ENCODE measurements at regions of chr1 and their contacts with region 1.

Region 1: DNA sequence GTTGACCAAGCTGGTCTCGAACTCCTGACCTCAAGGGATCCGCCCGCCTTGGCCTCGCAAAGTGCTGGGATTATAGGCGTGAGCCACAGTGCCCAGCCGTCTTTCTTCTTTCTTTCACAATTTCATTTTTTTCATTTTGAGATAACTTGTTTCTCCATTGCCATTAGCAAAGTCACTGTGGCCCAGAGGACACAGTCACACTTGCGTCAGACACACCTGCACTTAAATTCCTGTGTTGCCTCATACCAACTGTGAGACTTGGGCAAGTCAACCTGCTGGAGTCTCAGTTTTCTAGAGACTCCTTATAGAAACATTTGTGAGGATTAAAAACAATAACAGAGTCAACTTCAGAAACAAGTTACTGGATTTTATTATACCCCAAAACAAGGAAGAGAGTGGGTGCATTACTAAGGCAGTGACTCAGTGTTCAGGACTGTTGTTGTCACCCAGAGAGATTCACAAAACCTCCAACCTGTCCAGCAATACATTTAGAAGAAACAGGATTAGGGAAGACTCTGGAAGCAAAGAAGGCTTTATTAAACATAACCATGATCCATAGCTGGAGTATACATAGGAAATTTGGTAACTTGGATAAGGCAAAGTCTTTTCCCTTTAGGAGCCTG is 2.6 kb downstream of the TEDDM1 start:
- DNase-seq: no peak
- ATAC-seq: no peak
- H3K4me3 ChIP-seq: no peak overlapping the region
- H3K4me3 Mint-ChIP-seq: no peak overlapping the region
- H3K27ac ChIP-seq: no peak overlapping the region
- H3K27ac Mint-ChIP-seq: no peak overlapping the region
- H3K4me1 ChIP-seq: peaks cover 3 to 8% of the 10 kb centered on the region in 2 donors
- H3K4me1 Mint-ChIP-seq: peaks cover 9% of the 10 kb centered on the region
- H3K27me3 ChIP-seq: peaks cover 0 to 7% (median 3%) of the 10 kb centered on the region in 4 experiments
- H3K27me3 Mint-ChIP-seq: peaks cover 4% of the 10 kb centered on the region
- CTCF ChIP-seq: no peak

Region 2: DNA sequence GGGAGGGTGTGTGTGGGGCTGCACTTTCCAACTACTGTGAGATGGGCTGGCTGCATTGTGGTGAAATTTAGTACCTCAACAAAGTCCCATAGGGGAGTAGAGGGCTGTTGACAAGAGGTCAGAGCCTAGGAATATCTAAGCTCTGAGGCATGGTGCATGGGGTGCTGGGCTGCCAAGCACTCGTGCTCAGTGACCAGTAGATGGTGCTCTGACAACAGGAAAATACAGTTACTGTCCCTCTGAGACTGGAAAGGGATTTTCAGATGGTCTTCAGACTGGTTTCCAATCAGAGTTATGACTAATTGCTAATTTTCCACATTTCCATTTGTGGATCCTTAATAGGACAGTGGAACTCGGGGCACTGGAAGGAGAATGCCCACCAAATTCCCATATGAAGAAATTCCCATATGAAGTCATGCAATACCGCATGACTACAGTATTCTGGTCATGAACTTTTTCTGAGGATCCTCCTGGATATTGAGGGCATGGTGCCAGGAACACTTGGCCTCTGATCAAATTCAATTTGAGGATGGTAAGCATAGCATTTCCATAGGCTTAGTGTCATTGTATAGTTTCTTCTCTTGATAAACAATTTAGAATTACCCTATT is 918.6 kb before region 1 on chr1:
- CTCF ChIA-PET with region 1: interaction called, 9 read pairs
- POLR2A ChIA-PET with region 1: no interaction called
- intact Hi-C with region 1: loop called (anchors 1 kb)
- DNase-seq: peak; percentile 64
- ATAC-seq: peak; percentile 60
- H3K4me3 ChIP-seq: no peak overlapping the region
- H3K4me3 Mint-ChIP-seq: no peak overlapping the region
- H3K27ac ChIP-seq: no peak overlapping the region
- H3K27ac Mint-ChIP-seq: no peak overlapping the region
- H3K4me1 ChIP-seq: peaks cover 8 to 11% of the 10 kb centered on the region in 2 donors
- H3K4me1 Mint-ChIP-seq: peaks cover 12% of the 10 kb centered on the region
- H3K27me3 ChIP-seq: peaks cover 0 to 32% (median 11%) of the 10 kb centered on the region in 4 experiments
- H3K27me3 Mint-ChIP-seq: peaks cover 37% of the 10 kb centered on the region
- CTCF ChIP-seq: peak; percentile 77

Region 3: GRCh38 chr1:182084487-182085316 is 313.2 kb before region 1 on chr1:
- CTCF ChIA-PET with region 1: interaction called, 31 read pairs
- POLR2A ChIA-PET with region 1: no interaction called
- intact Hi-C with region 1: no loop called
- DNase-seq: peak; percentile 53
- ATAC-seq: peak; percentile 64
- H3K4me3 ChIP-seq: no peak overlapping the region
- H3K4me3 Mint-ChIP-seq: no peak overlapping the region
- H3K27ac ChIP-seq: no peak overlapping the region
- H3K27ac Mint-ChIP-seq: no peak overlapping the region
- H3K4me1 ChIP-seq: peaks cover 0 to 5% of the 10 kb centered on the region in 2 donors
- H3K4me1 Mint-ChIP-seq: peaks cover 5% of the 10 kb centered on the region
- H3K27me3 ChIP-seq: no peaks in the 10 kb centered on the region
- H3K27me3 Mint-ChIP-seq: no peaks in the 10 kb centered on the region
- CTCF ChIP-seq: peak; percentile 59

Region 4: GRCh38 chr1:182149411-182149965 is 248.4 kb before region 1 on chr1:
- CTCF ChIA-PET with region 1: interaction called, 378 read pairs
- POLR2A ChIA-PET with region 1: no interaction called
- intact Hi-C with region 1: no loop called
- DNase-seq: peak; percentile 6
- ATAC-seq: no peak
- H3K4me3 ChIP-seq: peak overlapping the region in 1 of 5 experiments; percentile 6
- H3K4me3 Mint-ChIP-seq: no peak overlapping the region
- H3K27ac ChIP-seq: no peak overlapping the region
- H3K27ac Mint-ChIP-seq: no peak overlapping the region
- H3K4me1 ChIP-seq: peaks cover 0 to 5% of the 10 kb centered on the region in 2 donors
- H3K4me1 Mint-ChIP-seq: peaks cover 8% of the 10 kb centered on the region
- H3K27me3 ChIP-seq: no peaks in the 10 kb centered on the region
- H3K27me3 Mint-ChIP-seq: no peaks in the 10 kb centered on the region
- CTCF ChIP-seq: no peak

Region 5: GRCh38 chr1:182376936-182377574 is 20.8 kb before region 1 on chr1:
- CTCF ChIA-PET with region 1: interaction called, 16 read pairs
- POLR2A ChIA-PET with region 1: no interaction called
- intact Hi-C with region 1: no loop called
- DNase-seq: no peak
- ATAC-seq: no peak
- H3K4me3 ChIP-seq: no peak overlapping the region
- H3K4me3 Mint-ChIP-seq: no peak overlapping the region
- H3K27ac ChIP-seq: no peak overlapping the region
- H3K27ac Mint-ChIP-seq: no peak overlapping the region
- H3K4me1 ChIP-seq: no peaks in the 10 kb centered on the region
- H3K4me1 Mint-ChIP-seq: no peaks in the 10 kb centered on the region
- H3K27me3 ChIP-seq: no peaks in the 10 kb centered on the region
- H3K27me3 Mint-ChIP-seq: no peaks in the 10 kb centered on the region
- CTCF ChIP-seq: no peak

Region 6: GRCh38 chr1:182381962-182382819 is 15.7 kb before region 1 on chr1:
- CTCF ChIA-PET with region 1: interaction called, 16 read pairs
- POLR2A ChIA-PET with region 1: no interaction called
- intact Hi-C with region 1: no loop called
- DNase-seq: no peak
- ATAC-seq: no peak
- H3K4me3 ChIP-seq: no peak overlapping the region
- H3K4me3 Mint-ChIP-seq: no peak overlapping the region
- H3K27ac ChIP-seq: no peak overlapping the region
- H3K27ac Mint-ChIP-seq: no peak overlapping the region
- H3K4me1 ChIP-seq: no peaks in the 10 kb centered on the region
- H3K4me1 Mint-ChIP-seq: no peaks in the 10 kb centered on the region
- H3K27me3 ChIP-seq: no peaks in the 10 kb centered on the region
- H3K27me3 Mint-ChIP-seq: no peaks in the 10 kb centered on the region
- CTCF ChIP-seq: no peak

Region 7: GRCh38 chr1:182460550-182460951 is 62.7 kb after region 1 on chr1:
- CTCF ChIA-PET with region 1: no interaction called
- POLR2A ChIA-PET with region 1: no interaction called
- intact Hi-C with region 1: no loop called
- DNase-seq: no peak
- ATAC-seq: no peak
- H3K4me3 ChIP-seq: no peak overlapping the region
- H3K4me3 Mint-ChIP-seq: no peak overlapping the region
- H3K27ac ChIP-seq: no peak overlapping the region
- H3K27ac Mint-ChIP-seq: no peak overlapping the region
- H3K4me1 ChIP-seq: no peaks in the 10 kb centered on the region
- H3K4me1 Mint-ChIP-seq: no peaks in the 10 kb centered on the region
- H3K27me3 ChIP-seq: peaks cover 0 to 2% (median 0%) of the 10 kb centered on the region in 4 experiments
- H3K27me3 Mint-ChIP-seq: peaks cover 25% of the 10 kb centered on the region
- CTCF ChIP-seq: no peak

Region 8: DNA sequence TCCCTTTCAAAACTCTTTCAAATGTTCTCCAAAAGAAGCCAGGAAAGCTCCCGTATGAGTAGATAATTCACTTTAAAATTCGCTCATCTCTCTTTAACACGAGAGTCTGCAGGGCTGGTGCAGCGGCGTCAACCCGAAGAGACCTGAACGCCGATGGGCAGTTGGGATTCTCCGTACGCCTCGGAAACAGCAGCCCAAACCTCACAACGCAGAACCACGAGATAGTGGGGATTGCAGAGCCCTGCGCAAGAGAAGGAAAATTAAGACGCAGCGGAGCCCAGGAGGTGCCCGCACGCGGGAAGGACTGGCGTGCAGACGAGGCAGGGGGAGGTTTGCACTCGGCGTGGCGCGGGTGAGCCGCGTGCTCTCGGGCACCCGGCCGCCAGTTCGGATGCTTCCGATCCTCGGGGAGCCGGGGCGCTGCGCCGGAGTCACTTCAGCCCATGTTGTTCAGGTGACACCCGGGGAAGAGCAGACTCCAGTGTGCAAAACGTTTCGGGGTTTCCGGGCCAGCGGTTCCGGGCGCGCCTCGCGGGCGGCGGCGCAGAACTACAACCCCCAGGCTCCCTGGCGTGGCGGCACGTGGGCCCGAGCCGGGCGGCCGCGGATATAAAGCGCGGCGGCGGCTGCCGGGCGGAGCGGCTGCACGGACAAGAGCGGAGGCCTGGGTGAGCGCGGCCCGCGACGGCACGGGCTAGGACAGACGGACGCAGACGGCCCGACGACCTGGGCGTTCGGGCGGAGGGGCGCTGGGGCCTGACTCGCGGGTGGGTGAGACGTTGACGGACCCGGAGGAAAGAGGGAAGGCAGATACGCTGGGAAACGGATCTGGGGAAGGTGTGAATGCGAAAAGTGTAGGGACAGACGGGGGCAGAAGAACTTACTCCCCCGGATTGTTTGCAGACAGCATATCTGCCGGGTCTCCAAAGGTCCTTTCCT is 391.5 kb after region 1 on chr1 and contains the start of gene NPL:
- CTCF ChIA-PET with region 1: interaction called, 4 read pairs
- POLR2A ChIA-PET with region 1: no interaction called
- intact Hi-C with region 1: loop called (anchors 5 kb)
- DNase-seq: peak; percentile 88
- ATAC-seq: peak; percentile 95
- H3K4me3 ChIP-seq: peak within 1 kb of the TSS; percentile 49 to 70 (median 63)
- H3K4me3 Mint-ChIP-seq: peak within 1 kb of the TSS; percentile 90
- H3K27ac ChIP-seq: peak within 1 kb of the TSS in 1 of 2 donors; percentile 63
- H3K27ac Mint-ChIP-seq: peak within 1 kb of the TSS; percentile 87
- H3K4me1 ChIP-seq: peaks cover 9 to 11% of the 10 kb centered on the region in 2 donors
- H3K4me1 Mint-ChIP-seq: peaks cover 16% of the 10 kb centered on the region
- H3K27me3 ChIP-seq: peaks cover 0 to 6% (median 0%) of the 10 kb centered on the region in 4 experiments
- H3K27me3 Mint-ChIP-seq: peaks cover 3% of the 10 kb centered on the region
- CTCF ChIP-seq: no peak
- total RNA-seq, gene NPL: 3.4 and 5.9 TPM in 2 replicates

Region 9: DNA sequence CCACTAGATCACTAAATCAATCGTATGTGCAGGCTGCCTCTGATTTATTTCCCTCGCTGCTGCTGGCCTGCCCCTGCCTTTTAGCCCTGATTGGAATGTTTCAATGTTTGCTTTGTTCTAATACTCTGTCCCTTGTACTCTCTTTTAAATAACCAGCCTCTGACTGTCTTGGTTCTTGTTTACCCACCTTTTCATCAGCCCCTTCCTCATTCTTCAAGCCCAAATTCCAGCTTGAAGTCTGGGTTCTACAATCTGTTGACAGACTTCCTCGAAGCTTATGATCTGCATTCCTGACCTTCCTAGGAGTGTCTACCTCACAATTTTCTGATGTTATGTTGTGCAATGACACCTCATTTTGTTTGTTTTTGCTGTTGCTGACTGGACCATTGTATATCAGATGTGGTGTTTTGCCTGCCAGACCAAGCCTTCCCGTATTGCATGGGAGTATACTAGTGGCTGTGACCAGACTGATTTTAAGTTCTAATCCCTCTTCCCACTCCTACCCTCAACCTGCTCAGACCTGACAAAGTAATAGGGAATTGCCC is 1301.8 kb after region 1 on chr1:
- CTCF ChIA-PET with region 1: no interaction called
- POLR2A ChIA-PET with region 1: no interaction called
- intact Hi-C with region 1: no loop called
- DNase-seq: no peak
- ATAC-seq: no peak
- H3K4me3 ChIP-seq: no peak overlapping the region
- H3K4me3 Mint-ChIP-seq: no peak overlapping the region
- H3K27ac ChIP-seq: no peak overlapping the region
- H3K27ac Mint-ChIP-seq: no peak overlapping the region
- H3K4me1 ChIP-seq: no peaks in the 10 kb centered on the region
- H3K4me1 Mint-ChIP-seq: no peaks in the 10 kb centered on the region
- H3K27me3 ChIP-seq: no peaks in the 10 kb centered on the region
- H3K27me3 Mint-ChIP-seq: no peaks in the 10 kb centered on the region
- CTCF ChIP-seq: no peak